Adrenal gland (tissue), 19 donors: ENCODE measurements at regions of chr3 and their contacts with region 1.

Region 1: GRCh38 chr3:8111069-8111798 is 390.4 kb upstream of the LMCD1 start:
- DNase-seq: peak; percentile 61 to 83 (median 66)
- H3K4me3 ChIP-seq: peak overlapping the region in 1 of 4 donors; percentile 18
- H3K27ac ChIP-seq: no peak overlapping the region
- H3K4me1 ChIP-seq: no peaks in the 10 kb centered on the region
- H3K27me3 ChIP-seq: no peaks in the 10 kb centered on the region
- CTCF ChIP-seq: peak; percentile 60 to 93 (median 84)
- POLR2A ChIP-seq: peak in 1 of 2 donors; percentile 24

Region 2: GRCh38 chr3:7800006-7800780 is 311.0 kb before region 1 on chr3:
- intact Hi-C with region 1: loop called (anchors 5 to 10 kb)
- DNase-seq: no peak
- H3K4me3 ChIP-seq: no peak overlapping the region
- H3K27ac ChIP-seq: no peak overlapping the region
- H3K4me1 ChIP-seq: peaks cover 0 to 7% of the 10 kb centered on the region in 2 donors
- H3K27me3 ChIP-seq: no peaks in the 10 kb centered on the region
- CTCF ChIP-seq: peak; percentile 25 to 63 (median 54)
- POLR2A ChIP-seq: no peak

Region 3: DNA sequence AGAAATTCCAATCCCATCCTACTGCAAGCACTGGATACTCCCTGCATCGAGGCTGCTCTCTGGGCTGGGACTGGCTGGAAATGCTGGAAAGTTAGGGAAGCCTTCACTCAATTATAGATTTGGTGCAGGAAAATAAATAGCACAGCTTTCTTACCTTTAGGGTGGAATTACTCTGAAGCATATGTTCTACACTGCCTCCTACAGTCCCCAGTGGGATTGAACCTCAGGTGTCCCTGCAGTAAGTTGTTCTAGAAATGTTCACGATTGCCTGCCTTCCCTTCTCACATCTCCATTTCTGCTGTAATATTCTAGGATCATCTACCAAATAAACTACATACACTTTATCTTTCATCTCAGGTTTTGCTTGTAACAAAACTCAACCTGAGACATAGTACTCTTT is 146.3 kb before region 1 on chr3:
- intact Hi-C with region 1: no loop called
- DNase-seq: no peak
- H3K4me3 ChIP-seq: no peak overlapping the region
- H3K27ac ChIP-seq: no peak overlapping the region
- H3K4me1 ChIP-seq: no peaks in the 10 kb centered on the region
- H3K27me3 ChIP-seq: no peaks in the 10 kb centered on the region
- CTCF ChIP-seq: no peak
- POLR2A ChIP-seq: no peak